Panc1 (cell line): ENCODE measurements at regions of chr6 and their contacts with region 1.

Region 1: GRCh38 chr6:125512621-125513020 is 210.9 kb upstream of the HDDC2 start:
- DNase-seq: peak; percentile 13
- ATAC-seq: no peak
- H3K4me3 ChIP-seq: no peak overlapping the region
- H3K27ac ChIP-seq: no peak overlapping the region
- H3K4me1 ChIP-seq: no peaks in the 10 kb centered on the region
- H3K27me3 ChIP-seq: no peaks in the 10 kb centered on the region
- CTCF ChIP-seq: peak; percentile 61

Region 2: GRCh38 chr6:125749173-125749864 is 236.7 kb after region 1 on chr6 and contains the start of gene HEY2:
- CTCF ChIA-PET with region 1: interaction called, 12 read pairs
- POLR2A ChIA-PET with region 1: no interaction called
- in situ Hi-C with region 1: no loop called
- intact Hi-C with region 1: loop called (anchors 5 kb)
- DNase-seq: no peak
- ATAC-seq: peak; percentile 95
- H3K4me3 ChIP-seq: peak within 1 kb of the TSS; percentile 65 to 74
- H3K27ac ChIP-seq: no peak within 1 kb of the TSS
- H3K4me1 ChIP-seq: peaks cover 27% of the 10 kb centered on the region
- H3K27me3 ChIP-seq: peaks cover 79% of the 10 kb centered on the region
- CTCF ChIP-seq: no peak
- total RNA-seq, gene HEY2: not detected

Region 3: DNA sequence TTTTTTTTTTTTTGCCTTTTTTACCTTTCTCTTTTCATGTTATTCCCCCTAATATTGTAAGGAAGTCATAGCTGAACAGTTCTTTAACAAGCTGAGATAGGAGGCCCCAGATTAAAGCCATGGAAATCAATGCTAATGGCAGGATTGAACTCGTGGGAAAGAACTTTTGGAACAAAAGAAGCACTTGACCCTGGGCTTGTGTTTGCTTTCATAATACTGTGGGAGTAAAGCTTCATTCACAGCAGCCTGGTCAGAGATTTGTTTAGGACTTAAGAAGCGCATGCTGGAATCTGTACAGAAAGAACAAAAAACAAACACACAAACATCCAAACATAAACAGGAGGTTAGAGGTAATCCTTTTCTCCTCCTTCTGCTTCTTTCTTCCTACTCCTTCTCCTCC is 241.9 kb after region 1 on chr6:
- CTCF ChIA-PET with region 1: interaction called, 12 read pairs
- POLR2A ChIA-PET with region 1: no interaction called
- in situ Hi-C with region 1: no loop called
- intact Hi-C with region 1: loop called (anchors 5 kb)
- DNase-seq: no peak
- ATAC-seq: no peak
- H3K4me3 ChIP-seq: no peak overlapping the region
- H3K27ac ChIP-seq: no peak overlapping the region
- H3K4me1 ChIP-seq: peaks cover 15% of the 10 kb centered on the region; the same call in 1 of the 2 replicates
- H3K27me3 ChIP-seq: peaks cover 63% of the 10 kb centered on the region
- CTCF ChIP-seq: no peak